Adrenal gland (tissue), 19 donors: ENCODE measurements at regions of chr11 and their contacts with region 1.

Region 1: GRCh38 chr11:68383976-68384501 is 71.6 kb downstream of the LRP5 start:
- DNase-seq: peak; percentile 50 to 85 (median 72)
- H3K4me3 ChIP-seq: no peak overlapping the region
- H3K27ac ChIP-seq: peak overlapping the region in 1 of 5 donors; percentile 23
- H3K4me1 ChIP-seq: peaks cover 9 to 45% of the 10 kb centered on the region in 2 donors
- H3K27me3 ChIP-seq: no peaks in the 10 kb centered on the region
- CTCF ChIP-seq: peak; percentile 86 to 95 (median 90)
- POLR2A ChIP-seq: no peak

Region 2: GRCh38 chr11:68164437-68164836 is 219.6 kb before region 1 on chr11:
- intact Hi-C with region 1: no loop called
- DNase-seq: no peak
- H3K4me3 ChIP-seq: no peak overlapping the region
- H3K27ac ChIP-seq: no peak overlapping the region
- H3K4me1 ChIP-seq: peaks cover 3 to 12% of the 10 kb centered on the region in 2 donors
- H3K27me3 ChIP-seq: no peaks in the 10 kb centered on the region
- CTCF ChIP-seq: no peak
- POLR2A ChIP-seq: no peak

Region 3: DNA sequence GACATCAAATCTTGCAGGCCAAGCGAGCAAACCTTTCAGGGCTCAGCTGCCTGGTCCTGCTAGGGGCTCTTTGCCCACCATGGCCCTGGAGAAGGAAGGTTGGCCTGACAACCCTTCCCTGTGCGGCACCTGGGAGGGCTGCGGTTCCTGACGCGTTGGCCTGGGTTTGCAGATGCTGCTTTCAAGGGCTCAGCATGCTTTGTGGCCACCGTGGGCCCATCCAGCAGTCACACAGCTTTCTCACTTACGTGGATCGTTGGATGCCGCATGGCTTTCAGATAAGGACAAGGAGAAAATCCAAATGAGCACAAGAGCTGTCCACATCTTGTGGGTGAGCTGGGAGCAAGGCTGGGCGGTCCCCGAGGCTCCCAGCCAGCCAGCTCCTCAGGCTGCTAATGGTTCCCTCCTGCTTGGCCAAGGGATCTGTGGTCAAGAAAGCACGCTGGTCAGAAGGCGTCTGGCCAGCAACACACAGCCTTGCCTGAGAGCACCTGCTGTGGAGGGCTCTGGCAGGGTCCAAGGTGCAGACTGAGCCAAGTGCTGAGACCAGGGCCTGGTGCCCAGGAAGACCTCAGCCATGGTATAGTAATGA is 120.5 kb before region 1 on chr11:
- intact Hi-C with region 1: loop called (anchors 5 kb)
- DNase-seq: peak in 1 of 7 donors; percentile 42
- H3K4me3 ChIP-seq: no peak overlapping the region
- H3K27ac ChIP-seq: no peak overlapping the region
- H3K4me1 ChIP-seq: peaks cover 0 to 4% of the 10 kb centered on the region in 2 donors
- H3K27me3 ChIP-seq: no peaks in the 10 kb centered on the region
- CTCF ChIP-seq: no peak
- POLR2A ChIP-seq: no peak

Region 4: DNA sequence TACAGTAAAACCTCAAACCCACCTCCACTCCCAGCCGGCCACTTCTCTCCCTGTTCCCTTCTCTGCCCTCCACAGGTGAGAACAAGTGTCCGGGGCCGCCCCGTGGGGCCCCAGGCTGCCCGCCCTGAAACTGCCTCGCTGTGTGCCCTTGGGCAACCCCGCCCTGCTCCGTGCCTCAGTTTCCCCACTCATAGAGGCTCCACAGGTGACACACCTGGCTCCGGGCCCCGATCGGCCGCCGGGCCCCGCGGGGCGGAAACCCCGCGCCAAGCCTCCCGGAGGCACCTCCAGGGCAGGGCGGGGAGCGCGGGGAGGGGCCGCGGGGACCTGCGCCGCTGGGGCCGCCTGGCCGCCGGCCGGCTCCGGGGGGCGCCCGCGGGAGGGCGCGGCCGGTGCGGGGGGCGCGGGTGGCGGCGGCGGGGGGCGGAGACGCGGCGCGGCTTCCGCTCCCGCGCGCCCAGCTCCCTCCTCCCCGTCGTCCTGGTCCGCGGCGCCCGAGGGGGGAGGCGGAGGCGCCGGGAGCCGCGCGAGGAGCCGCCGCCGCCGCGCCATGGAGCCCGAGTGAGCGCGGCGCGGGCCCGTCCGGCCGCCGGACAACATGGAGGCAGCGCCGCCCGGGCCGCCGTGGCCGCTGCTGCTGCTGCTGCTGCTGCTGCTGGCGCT is 71.8 kb before region 1 on chr11 and contains the start of gene LRP5:
- intact Hi-C with region 1: loop called in 1 of 2 experiments (anchors 5 kb)
- DNase-seq: peak in 1 of 7 donors; percentile 37
- H3K4me3 ChIP-seq: peak within 1 kb of the TSS in 2 of 4 donors; percentile 26 to 97
- H3K27ac ChIP-seq: peak within 1 kb of the TSS in 3 of 5 donors; percentile 62 to 92 (median 91)
- H3K4me1 ChIP-seq: peaks cover 34 to 40% of the 10 kb centered on the region in 2 donors
- H3K27me3 ChIP-seq: no peaks in the 10 kb centered on the region
- CTCF ChIP-seq: no peak
- POLR2A ChIP-seq: peak in 1 of 2 donors; percentile 29
- total RNA-seq, gene LRP5: 10.7 to 277 (median 72.1) TPM